Right ventricle myocardium inferior (tissue), 1 donor: ENCODE measurements at regions of chr11 and their contacts with region 1.

Region 1: DNA sequence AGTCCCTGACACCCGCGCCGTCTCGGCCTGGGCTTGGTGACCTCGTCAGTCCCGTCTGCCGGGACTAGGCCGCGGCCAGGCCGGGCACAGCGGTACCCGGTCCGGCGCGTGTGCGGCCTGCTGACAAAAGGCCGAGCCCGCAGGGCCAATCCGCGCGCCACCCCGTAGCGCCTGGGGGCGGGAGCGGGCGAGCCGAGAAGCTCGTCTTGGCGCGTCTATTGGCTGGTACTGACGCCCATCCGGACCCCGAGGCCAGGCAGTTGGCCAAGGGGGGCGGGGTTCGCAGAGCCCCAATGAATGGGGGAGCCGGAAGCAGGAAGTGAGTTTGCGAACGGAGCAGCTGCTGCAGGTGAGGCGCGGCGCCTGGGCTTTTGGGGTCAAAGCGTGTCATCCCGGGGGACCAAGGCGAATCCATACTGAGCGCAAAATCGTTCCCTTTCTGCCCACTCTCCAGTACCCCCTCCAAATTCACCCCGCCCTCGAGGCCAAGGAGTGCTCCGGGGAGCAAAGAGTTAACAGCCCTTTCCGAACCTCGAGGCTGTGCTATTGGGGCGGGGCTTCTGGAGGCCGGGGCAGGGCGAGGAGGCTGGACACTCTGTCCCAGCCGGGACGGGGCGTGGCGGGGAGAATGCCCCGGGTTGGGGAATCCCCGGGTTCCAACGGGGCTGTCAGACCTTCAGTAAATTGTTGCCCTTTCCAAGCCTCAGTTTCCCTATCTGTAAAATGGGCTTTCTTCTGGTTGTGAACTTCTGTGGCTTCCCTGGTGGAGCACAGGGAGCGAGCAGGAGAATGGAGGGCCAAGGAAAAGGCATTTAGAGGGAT is at the start of gene DPP3:
- DNase-seq: peak; percentile 98
- ATAC-seq: peak; percentile 96
- total RNA-seq, gene DPP3: 15.8 TPM

Region 2: GRCh38 chr11:66466225-66467027 is 13.9 kb before region 1 on chr11 and contains the start of gene PELI3:
- intact Hi-C with region 1: loop called (anchors 2 kb)
- DNase-seq: peak; percentile 95
- ATAC-seq: peak; percentile 99
- total RNA-seq, gene PELI3: 8.4 TPM